ENCODE measurements at regions of chr10 and their contacts with region 1.

Region 1: DNA sequence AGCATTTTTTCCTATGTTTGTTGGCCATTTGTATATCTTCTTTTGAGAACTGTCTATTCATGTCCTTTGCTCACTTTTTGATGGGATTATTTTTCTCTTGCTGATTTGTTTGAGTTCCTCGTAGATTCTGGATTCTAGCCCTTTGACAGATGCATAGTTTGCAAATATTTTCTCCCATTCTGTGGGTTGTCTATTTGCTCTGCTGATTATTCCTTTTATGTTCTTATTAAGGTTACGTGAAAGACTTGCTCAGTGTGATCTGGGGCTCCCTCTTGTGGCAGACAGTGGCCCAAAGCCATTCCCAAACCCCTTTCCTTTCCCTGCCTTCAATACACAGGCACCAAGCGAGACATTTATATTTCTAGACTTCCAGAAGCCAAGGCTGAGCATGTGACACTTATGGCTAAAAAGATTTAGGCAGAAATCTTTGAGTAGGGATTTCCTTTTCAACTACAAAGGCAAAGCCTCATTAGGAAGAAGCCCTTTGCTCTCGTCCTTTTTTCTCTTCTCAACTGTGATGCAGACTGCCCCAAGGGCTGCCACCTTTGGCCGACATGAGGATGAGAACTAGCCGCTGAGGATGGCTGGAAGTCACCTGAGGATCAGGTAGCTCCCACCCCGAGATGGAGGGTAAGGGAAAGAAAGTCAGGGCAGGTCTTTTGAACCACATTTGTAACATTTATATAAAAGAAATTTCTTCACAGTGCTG is 23.6 kb downstream of the ST8SIA6 start:
- DNase-seq: no peak
- H3K4me3 ChIP-seq: no peak overlapping the region
- CTCF ChIP-seq: peak; percentile 85

Region 2: GRCh38 chr10:16828114-16828568 is 602.7 kb before region 1 on chr10:
- CTCF ChIA-PET with region 1: interaction called, 19 read pairs
- POLR2A ChIA-PET with region 1: no interaction called
- DNase-seq: peak; percentile 31
- H3K4me3 ChIP-seq: no peak overlapping the region
- CTCF ChIP-seq: peak; percentile 26

Region 3: DNA sequence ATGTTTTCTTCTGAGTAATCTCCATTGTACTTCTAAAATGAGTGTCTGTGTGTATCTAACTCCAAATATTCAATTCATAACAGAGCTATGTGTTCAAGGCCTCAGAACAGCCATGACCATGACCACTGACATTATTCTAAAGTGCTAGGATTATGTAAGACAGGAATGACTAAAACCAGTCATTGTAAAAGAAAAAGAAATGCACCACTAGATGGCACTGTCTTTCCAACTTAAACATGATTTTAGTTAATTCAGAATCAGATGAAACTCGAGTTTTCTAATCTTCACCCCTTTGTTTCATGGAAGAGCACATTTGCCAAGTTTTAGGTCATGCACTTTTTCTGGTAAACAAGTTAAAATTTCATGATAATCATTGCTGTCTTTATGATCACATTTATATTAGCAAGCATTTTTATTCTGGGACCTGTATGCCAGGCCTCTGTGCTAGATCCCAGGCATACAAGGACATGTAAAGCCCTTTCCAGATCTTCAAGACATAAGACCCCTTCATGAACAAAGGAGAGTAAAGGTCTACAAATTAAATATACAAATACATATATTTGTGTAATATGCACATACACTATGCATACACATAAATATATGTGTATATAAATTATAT is 587.4 kb before region 1 on chr10:
- CTCF ChIA-PET with region 1: interaction called, 12 read pairs
- POLR2A ChIA-PET with region 1: no interaction called
- DNase-seq: no peak
- H3K4me3 ChIP-seq: no peak overlapping the region
- CTCF ChIP-seq: no peak

Region 4: DNA sequence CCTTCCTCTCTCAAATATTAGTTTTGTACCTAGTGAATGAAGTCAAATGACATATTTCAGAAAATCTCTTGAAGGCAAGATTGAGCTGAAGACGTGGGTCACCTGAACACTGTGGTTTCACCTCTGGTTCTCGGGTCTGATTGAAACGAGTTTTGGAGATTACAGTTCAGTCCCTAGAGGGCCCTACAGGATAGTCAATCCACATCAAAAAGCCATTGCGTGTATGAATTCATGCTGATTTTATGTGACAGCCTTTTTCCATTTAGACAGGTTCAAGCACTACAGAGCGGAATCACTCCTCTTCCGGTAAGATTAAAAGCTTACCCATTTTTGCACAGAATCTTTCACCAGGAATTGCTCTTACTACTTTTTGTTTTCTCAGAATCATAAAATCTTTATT is 140.6 kb before region 1 on chr10:
- CTCF ChIA-PET with region 1: interaction called, 17 read pairs
- POLR2A ChIA-PET with region 1: no interaction called
- DNase-seq: no peak
- H3K4me3 ChIP-seq: no peak overlapping the region
- CTCF ChIP-seq: no peak

Region 5: DNA sequence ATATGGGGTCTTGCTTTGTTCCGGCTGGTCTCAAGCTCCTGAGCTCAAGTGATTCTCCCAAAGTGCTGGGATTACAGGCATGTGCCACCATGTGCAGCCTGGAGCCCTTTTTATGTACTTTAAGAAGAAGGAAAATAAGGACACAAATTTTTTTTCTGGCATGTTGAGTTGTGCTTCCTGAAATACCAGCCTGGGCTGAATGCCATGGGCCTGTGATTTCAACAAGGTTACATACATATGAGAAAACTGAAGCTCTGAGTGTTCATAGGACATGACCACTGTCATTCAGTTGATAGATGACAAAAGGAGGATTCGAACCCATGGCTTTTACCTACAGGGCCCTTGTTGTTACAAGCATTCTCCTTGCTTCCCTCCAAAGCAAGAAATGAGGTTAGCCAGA is 12.6 kb before region 1 on chr10:
- CTCF ChIA-PET with region 1: interaction called, 16 read pairs
- POLR2A ChIA-PET with region 1: no interaction called
- DNase-seq: no peak
- H3K4me3 ChIP-seq: no peak overlapping the region
- CTCF ChIP-seq: no peak

Region 6: DNA sequence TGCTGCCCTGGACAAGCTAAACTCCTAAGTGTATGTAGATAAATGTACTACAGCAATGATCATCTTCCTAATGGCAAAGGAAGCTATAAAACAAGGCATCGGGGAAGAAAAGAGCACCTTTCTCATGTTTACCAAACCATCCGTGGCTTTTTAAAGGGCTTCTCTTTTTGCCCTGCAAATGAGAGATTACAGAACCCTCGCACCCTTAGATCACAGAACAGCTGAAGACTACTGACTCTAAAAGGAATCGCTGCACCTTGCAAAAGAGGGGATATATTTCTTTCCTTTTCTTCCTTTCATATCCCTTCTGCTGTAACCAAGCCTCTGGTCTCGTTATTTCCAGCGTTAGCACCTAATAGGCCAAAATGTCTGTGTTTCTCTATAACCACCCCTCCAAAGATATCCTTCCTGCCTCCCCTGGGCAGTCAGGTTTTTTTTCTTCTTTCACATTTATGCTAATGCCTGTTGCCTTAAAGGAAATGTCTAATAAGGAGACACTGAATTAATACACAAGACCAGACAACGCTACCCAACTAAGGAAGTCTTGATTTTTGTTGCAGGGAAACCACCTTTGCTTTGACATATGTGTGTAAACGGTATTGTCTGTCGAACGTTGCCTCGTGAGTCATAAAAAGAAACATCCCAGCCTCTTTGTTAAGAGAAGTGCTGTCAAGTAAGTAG is 13.0 kb after region 1 on chr10:
- CTCF ChIA-PET with region 1: interaction called, 23 read pairs
- POLR2A ChIA-PET with region 1: no interaction called
- DNase-seq: no peak
- H3K4me3 ChIP-seq: no peak overlapping the region
- CTCF ChIP-seq: no peak

Region 7: DNA sequence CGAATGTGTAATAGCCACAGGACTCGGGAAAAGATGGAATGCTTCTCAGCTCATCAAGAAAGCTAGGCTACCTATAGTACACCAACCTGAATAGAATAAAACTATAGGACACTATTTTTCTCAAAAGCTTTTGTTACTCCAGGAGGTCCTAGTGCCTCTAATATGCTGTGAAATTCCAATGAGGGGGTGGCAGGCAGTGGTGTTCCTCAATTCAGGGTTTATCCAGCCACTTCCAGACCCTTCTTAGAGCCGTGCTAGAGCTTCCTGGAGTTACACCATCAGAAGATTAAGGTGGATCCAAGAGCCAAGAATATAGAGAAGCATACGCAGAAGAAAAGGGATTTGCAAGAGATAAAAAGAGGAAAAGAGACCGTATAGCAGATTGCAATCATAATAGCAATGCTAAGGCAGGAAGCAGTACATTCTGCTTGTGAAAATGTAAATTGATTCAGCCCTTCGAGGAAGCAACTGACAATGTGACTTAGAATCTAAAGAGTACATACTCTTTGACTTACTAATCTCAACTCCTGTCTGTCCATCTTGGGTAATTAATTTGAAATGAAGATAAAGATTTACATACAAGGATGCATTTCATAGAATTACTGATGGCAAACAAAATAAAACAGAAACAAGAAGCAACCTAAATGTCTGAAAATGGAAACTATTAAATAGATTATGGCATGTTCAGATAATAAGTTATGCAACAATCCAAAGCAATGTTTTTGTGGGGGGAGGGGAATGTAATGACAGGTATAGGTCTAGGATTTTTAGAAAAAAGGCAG is 21.4 kb after region 1 on chr10:
- CTCF ChIA-PET with region 1: interaction called, 23 read pairs
- POLR2A ChIA-PET with region 1: no interaction called
- DNase-seq: no peak
- H3K4me3 ChIP-seq: no peak overlapping the region
- CTCF ChIP-seq: no peak

Region 8: GRCh38 chr10:17527516-17528146 is 96.8 kb after region 1 on chr10:
- CTCF ChIA-PET with region 1: no interaction called
- POLR2A ChIA-PET with region 1: no interaction called
- DNase-seq: no peak
- H3K4me3 ChIP-seq: no peak overlapping the region
- CTCF ChIP-seq: no peak